K562 (cell line): ENCODE measurements at regions of chr6 and their contacts with region 1.

Region 1: GRCh38 chr6:15073344-15073789 is 172.5 kb upstream of the JARID2 start:
- DNase-seq: no peak
- ATAC-seq: no peak
- H3K4me3 ChIP-seq: no peak overlapping the region
- H3K27ac ChIP-seq: no peak overlapping the region
- H3K4me1 ChIP-seq: peaks cover 14 to 15% of the 10 kb centered on the region in 2 experiments; a peak in 4 of 5 replicates
- H3K27me3 ChIP-seq: no peaks in the 10 kb centered on the region
- CTCF ChIP-seq: no peak
- EP300 ChIP-seq: no peak
- POLR2A ChIP-seq: no peak
- RAD21 ChIP-seq: no peak

Region 2: DNA sequence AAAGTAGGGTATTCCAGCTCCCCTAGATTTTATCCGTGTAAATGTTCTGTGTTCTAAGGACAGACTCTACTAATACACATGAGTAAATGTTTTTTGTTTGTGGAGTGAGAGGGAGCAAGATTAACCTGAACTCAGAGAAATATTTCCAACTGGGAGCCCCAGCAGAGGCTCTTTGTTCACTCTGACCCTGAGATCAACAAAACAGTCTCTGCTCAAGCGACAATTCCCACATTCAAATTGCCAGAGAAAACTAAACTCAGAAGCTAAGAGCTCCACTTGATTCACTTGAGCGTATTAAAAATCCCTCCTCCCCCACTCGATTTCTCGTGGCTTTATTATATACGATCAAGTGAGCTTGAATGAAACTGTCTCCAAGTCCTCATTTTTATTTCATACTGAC is 241.4 kb before region 1 on chr6:
- CTCF ChIA-PET with region 1: no interaction called
- POLR2A ChIA-PET with region 1: no interaction called
- in situ Hi-C with region 1: no loop called
- intact Hi-C with region 1: no loop called
- DNase-seq: no peak
- ATAC-seq: no peak
- H3K4me3 ChIP-seq: no peak overlapping the region
- H3K27ac ChIP-seq: no peak overlapping the region
- H3K4me1 ChIP-seq: no peaks in the 10 kb centered on the region
- H3K27me3 ChIP-seq: no peaks in the 10 kb centered on the region
- CTCF ChIP-seq: no peak
- EP300 ChIP-seq: no peak
- POLR2A ChIP-seq: no peak
- RAD21 ChIP-seq: no peak

Region 3: DNA sequence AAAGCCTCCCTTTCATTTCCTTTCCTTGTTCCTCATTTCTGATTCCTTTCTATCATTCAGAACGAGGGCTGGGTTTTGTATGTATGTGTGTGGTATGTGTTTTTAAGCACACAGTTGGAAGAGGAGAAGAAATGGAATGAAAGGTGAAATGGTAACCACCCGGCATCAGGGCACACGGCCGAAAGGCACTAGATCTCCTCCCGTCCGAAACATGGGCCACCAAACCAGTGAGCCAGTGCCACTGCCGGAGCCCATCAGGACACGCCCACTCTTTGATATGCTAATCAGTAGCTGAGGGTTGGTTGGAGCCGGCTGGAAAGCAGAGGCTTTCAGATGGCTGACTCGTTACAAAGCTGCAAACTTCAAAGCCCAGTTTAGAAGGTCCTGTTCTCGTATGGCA is 56.1 kb before region 1 on chr6:
- CTCF ChIA-PET with region 1: no interaction called
- POLR2A ChIA-PET with region 1: interaction called, 3 read pairs
- in situ Hi-C with region 1: no loop called
- intact Hi-C with region 1: loop called (anchors 5 kb)
- DNase-seq: peak; percentile 69 to 81 (median 76)
- ATAC-seq: peak; percentile 90
- H3K4me3 ChIP-seq: peak overlapping the region; percentile 8; the same call in 1 of the 2 replicates
- H3K27ac ChIP-seq: peak overlapping the region; percentile 30; the same call in 2 of the 3 replicates
- H3K4me1 ChIP-seq: peaks cover 23 to 32% of the 10 kb centered on the region in 2 experiments
- H3K27me3 ChIP-seq: no peaks in the 10 kb centered on the region
- CTCF ChIP-seq: no peak
- EP300 ChIP-seq: no peak
- POLR2A ChIP-seq: 0 out of 2 replicates have a peak, but pooled peaks have one; percentile 38
- RAD21 ChIP-seq: peak in 1 of 2 experiments; percentile 9; a peak in 1 of 4 replicates

Region 4: GRCh38 chr6:15062516-15063252 is 10.7 kb before region 1 on chr6:
- CTCF ChIA-PET with region 1: no interaction called
- POLR2A ChIA-PET with region 1: interaction called, 10 read pairs
- in situ Hi-C with region 1: no loop called
- intact Hi-C with region 1: no loop called
- DNase-seq: peak; percentile 48 to 91 (median 68)
- ATAC-seq: peak; percentile 78
- H3K4me3 ChIP-seq: no peak overlapping the region
- H3K27ac ChIP-seq: peak overlapping the region; percentile 85
- H3K4me1 ChIP-seq: peaks cover 35 to 49% of the 10 kb centered on the region in 2 experiments
- H3K27me3 ChIP-seq: no peaks in the 10 kb centered on the region
- CTCF ChIP-seq: no peak
- EP300 ChIP-seq: peak; percentile 94
- POLR2A ChIP-seq: no peak
- RAD21 ChIP-seq: peak in 1 of 2 experiments; percentile 40; a peak in 3 of 4 replicates

Region 5: GRCh38 chr6:15744818-15745402 is 671.5 kb after region 1 on chr6:
- CTCF ChIA-PET with region 1: no interaction called
- POLR2A ChIA-PET with region 1: no interaction called
- in situ Hi-C with region 1: no loop called
- intact Hi-C with region 1: no loop called
- DNase-seq: no peak
- ATAC-seq: peak; percentile 64
- H3K4me3 ChIP-seq: no peak overlapping the region
- H3K27ac ChIP-seq: no peak overlapping the region
- H3K4me1 ChIP-seq: no peaks in the 10 kb centered on the region
- H3K27me3 ChIP-seq: no peaks in the 10 kb centered on the region
- CTCF ChIP-seq: no peak
- EP300 ChIP-seq: no peak
- POLR2A ChIP-seq: no peak
- RAD21 ChIP-seq: no peak